Activated CD4-positive, alpha-beta memory T cell treated with anti-CD3 and anti-CD28 coated beads, Interleukin-2, amount 10 ng/mL, durations not matched to agents 7 days and 5 days (primary cell): ENCODE measurements at regions of chr12 and their contacts with region 1.

Region 1: GRCh38 chr12:110546339-110546738 is 36.8 kb downstream of the PPTC7 start:
- DNase-seq: no peak
- H3K4me3 Mint-ChIP-seq: no peak overlapping the region
- H3K27ac Mint-ChIP-seq: no peak overlapping the region
- H3K4me1 Mint-ChIP-seq: peaks cover 39% of the 10 kb centered on the region
- H3K27me3 Mint-ChIP-seq: no peaks in the 10 kb centered on the region

Region 2: GRCh38 chr12:110159671-110160245 is 386.6 kb before region 1 on chr12:
- CTCF ChIA-PET with region 1: no interaction called
- POLR2A ChIA-PET with region 1: no interaction called
- DNase-seq: no peak
- H3K4me3 Mint-ChIP-seq: no peak overlapping the region
- H3K27ac Mint-ChIP-seq: no peak overlapping the region
- H3K4me1 Mint-ChIP-seq: peaks cover 7% of the 10 kb centered on the region
- H3K27me3 Mint-ChIP-seq: no peaks in the 10 kb centered on the region

Region 3: GRCh38 chr12:110577717-110578521 is 31.6 kb after region 1 on chr12:
- CTCF ChIA-PET with region 1: interaction called, 12 read pairs
- POLR2A ChIA-PET with region 1: interaction called, 3 read pairs
- DNase-seq: peak; percentile 54
- H3K4me3 Mint-ChIP-seq: peak overlapping the region; percentile 67
- H3K27ac Mint-ChIP-seq: peak overlapping the region; percentile 98
- H3K4me1 Mint-ChIP-seq: peaks cover 66% of the 10 kb centered on the region
- H3K27me3 Mint-ChIP-seq: no peaks in the 10 kb centered on the region